H1 (cell line): ENCODE measurements at regions of chr19 and their contacts with region 1.

Region 1: GRCh38 chr19:53947624-53948023 is 15.1 kb upstream of the CACNG8 start:
- DNase-seq: no peak
- H3K4me3 ChIP-seq: no peak overlapping the region
- H3K27ac ChIP-seq: no peak overlapping the region
- H3K4me1 ChIP-seq: peaks cover 0 to 14% (median 7%) of the 10 kb centered on the region in 4 experiments; a peak in 4 of 7 replicates
- H3K27me3 ChIP-seq: no peaks in the 10 kb centered on the region
- CTCF ChIP-seq: peak; percentile 32 to 74 (median 67)
- EP300 ChIP-seq: no peak
- POLR2A ChIP-seq: no peak
- RAD21 ChIP-seq: peak; percentile 65 to 74

Region 2: GRCh38 chr19:53808710-53809125 is 138.9 kb before region 1 on chr19:
- CTCF ChIA-PET with region 1: interaction called, 12 read pairs
- POLR2A ChIA-PET with region 1: no interaction called
- DNase-seq: no peak
- H3K4me3 ChIP-seq: no peak overlapping the region
- H3K27ac ChIP-seq: no peak overlapping the region
- H3K4me1 ChIP-seq: no peaks in the 10 kb centered on the region; a peak in 1 of 7 replicates
- H3K27me3 ChIP-seq: peaks cover 0 to 5% (median 1%) of the 10 kb centered on the region in 4 experiments; a peak in 4 of 7 replicates
- CTCF ChIP-seq: peak in 2 of 3 experiments; percentile 68 to 77; a peak in 3 of 4 replicates
- EP300 ChIP-seq: no peak
- POLR2A ChIP-seq: no peak
- RAD21 ChIP-seq: peak; percentile 84 to 87

Region 3: GRCh38 chr19:53912653-53913052 is 35.0 kb before region 1 on chr19:
- CTCF ChIA-PET with region 1: interaction called, 52 read pairs
- POLR2A ChIA-PET with region 1: interaction called, 14 read pairs
- DNase-seq: peak in 1 of 2 experiments; percentile 94
- H3K4me3 ChIP-seq: no peak overlapping the region
- H3K27ac ChIP-seq: no peak overlapping the region
- H3K4me1 ChIP-seq: peaks cover 0 to 8% (median 2%) of the 10 kb centered on the region in 4 experiments; a peak in 4 of 7 replicates
- H3K27me3 ChIP-seq: peaks cover 0 to 10% (median 5%) of the 10 kb centered on the region in 4 experiments; a peak in 5 of 7 replicates
- CTCF ChIP-seq: peak; percentile 87 to 97 (median 95)
- EP300 ChIP-seq: no peak
- POLR2A ChIP-seq: no peak
- RAD21 ChIP-seq: peak; percentile 61 to 70

Region 4: DNA sequence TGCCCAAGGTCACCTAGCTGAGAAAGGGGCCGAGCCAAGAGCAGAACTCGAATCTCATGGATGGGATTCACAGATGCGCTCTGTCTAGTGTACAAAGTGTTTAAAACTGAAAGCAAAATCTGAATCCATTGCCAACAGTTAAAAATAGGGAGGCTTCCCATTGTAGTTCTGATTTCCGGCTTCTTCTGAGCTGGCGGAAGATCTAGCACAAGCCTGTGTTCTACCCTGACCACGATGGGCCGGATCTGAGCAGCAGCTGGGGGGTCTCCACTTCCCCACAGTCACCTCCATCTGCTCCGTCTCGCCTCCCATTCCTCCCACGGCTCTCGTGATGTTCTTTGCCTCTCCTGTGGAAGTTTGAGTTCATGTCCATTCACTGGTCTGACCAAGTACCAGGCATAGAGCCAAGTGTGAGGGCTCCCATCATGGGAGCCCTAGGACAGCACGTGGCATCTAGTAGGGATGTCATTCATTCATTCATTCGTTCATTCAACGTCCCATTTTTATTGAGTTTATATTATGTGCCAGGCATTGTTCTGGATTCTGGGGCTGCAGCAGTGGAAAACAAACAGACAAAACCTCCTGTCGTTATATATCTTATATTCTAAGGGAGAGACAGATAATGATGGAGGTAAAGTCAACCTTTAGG is 17.6 kb after region 1 on chr19:
- CTCF ChIA-PET with region 1: interaction called, 23 read pairs
- POLR2A ChIA-PET with region 1: interaction called, 33 read pairs
- DNase-seq: no peak
- H3K4me3 ChIP-seq: no peak overlapping the region
- H3K27ac ChIP-seq: no peak overlapping the region
- H3K4me1 ChIP-seq: peaks cover 0 to 11% (median 3%) of the 10 kb centered on the region in 4 experiments; a peak in 5 of 7 replicates
- H3K27me3 ChIP-seq: peaks cover 0 to 3% (median 1%) of the 10 kb centered on the region in 4 experiments; a peak in 2 of 7 replicates
- CTCF ChIP-seq: no peak
- EP300 ChIP-seq: no peak
- POLR2A ChIP-seq: no peak
- RAD21 ChIP-seq: no peak

Region 5: GRCh38 chr19:53982611-53983010 is 35.0 kb after region 1 on chr19:
- CTCF ChIA-PET with region 1: interaction called, 8 read pairs
- POLR2A ChIA-PET with region 1: interaction called, 15 read pairs
- DNase-seq: peak in 1 of 2 experiments; percentile 66
- H3K4me3 ChIP-seq: peak overlapping the region in 2 of 4 experiments; percentile 18 to 35; a peak in 3 of 8 replicates
- H3K27ac ChIP-seq: no peak overlapping the region
- H3K4me1 ChIP-seq: peaks cover 4 to 13% (median 9%) of the 10 kb centered on the region in 4 experiments
- H3K27me3 ChIP-seq: peaks cover 0 to 5% (median 2%) of the 10 kb centered on the region in 4 experiments; a peak in 3 of 7 replicates
- CTCF ChIP-seq: no peak
- EP300 ChIP-seq: no peak
- POLR2A ChIP-seq: no peak
- RAD21 ChIP-seq: no peak

Region 6: DNA sequence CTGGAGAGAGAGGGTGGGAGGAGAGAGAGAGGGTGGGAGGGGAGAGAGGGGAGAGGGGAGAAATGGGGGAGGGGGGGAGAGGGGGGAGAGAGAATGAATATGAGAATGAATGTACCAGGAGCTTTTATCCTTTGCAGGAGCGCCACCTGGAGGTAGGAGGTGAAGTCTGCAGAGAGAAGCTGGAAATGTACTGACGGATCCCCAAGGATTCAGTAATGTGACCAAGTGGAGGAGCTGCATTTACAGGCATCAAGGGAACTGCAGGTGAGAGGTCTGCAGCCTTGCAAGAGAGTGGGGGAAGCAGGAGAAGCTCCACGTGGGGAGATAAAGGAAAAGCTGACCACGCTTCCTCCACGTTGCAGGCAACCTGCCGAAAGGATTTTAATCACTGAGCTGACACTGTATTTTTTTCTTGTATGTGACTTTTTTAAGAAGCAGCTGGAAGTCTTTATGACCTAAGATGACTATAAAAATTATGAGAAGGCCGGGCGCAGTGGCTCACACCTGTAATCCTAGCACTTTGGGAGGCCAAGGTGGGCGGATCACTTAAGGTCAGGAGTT is 82.4 kb after region 1 on chr19:
- CTCF ChIA-PET with region 1: interaction called, 33 read pairs
- POLR2A ChIA-PET with region 1: no interaction called
- DNase-seq: peak; percentile 50 to 86
- H3K4me3 ChIP-seq: no peak overlapping the region
- H3K27ac ChIP-seq: no peak overlapping the region
- H3K4me1 ChIP-seq: peaks cover 2 to 8% (median 4%) of the 10 kb centered on the region in 4 experiments; a peak in 6 of 7 replicates
- H3K27me3 ChIP-seq: no peaks in the 10 kb centered on the region
- CTCF ChIP-seq: peak; percentile 43 to 79 (median 75)
- EP300 ChIP-seq: no peak
- POLR2A ChIP-seq: no peak
- RAD21 ChIP-seq: peak; percentile 82 to 85

Region 7: DNA sequence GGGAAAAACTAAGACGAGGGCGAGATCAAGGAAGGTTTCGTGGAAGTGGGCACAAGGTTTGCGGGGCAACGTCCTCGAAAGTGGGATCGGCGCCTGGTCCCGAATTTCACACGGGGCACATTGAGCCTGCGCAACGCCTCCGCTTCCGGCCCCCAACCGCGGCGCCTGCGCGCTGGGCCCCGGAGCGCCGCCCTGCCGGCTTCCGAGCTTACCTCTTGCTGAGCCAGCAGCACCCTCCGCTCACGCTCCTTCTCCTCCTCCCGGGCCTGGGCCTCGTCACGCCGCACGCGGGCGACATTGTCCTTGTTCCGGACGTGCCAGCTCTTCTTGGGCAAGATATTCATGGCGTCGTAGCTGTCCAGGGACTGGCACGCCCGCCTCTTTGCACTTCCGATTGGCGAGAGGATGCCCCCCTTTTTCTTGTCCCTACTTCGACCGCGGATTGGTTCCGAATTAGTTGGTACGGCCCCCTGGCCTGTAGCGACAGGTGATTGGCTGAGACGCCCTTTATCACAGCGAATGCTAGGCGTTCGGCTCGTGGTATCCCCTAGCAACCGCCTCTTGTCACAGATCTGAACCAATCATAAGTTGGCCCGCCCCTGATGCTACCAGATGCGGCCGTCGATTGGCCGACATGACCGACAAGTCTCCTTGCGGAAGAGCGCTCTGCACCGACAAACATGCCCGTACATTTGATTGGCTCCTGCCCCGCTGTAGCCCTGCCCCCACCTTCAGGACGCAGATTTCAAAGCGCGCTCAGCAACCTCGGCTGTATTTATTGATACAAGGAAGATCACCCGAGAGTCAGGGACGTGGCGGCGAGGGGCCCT is 211.9 kb after region 1 on chr19 and contains the start of gene LENG1:
- CTCF ChIA-PET with region 1: no interaction called
- POLR2A ChIA-PET with region 1: no interaction called
- DNase-seq: peak; percentile 93 to 100
- H3K4me3 ChIP-seq: peak within 1 kb of the TSS; percentile 81 to 96 (median 88)
- H3K27ac ChIP-seq: peak within 1 kb of the TSS; percentile 84
- H3K4me1 ChIP-seq: peaks cover 0 to 24% (median 11%) of the 10 kb centered on the region in 4 experiments; a peak in 6 of 7 replicates
- H3K27me3 ChIP-seq: peaks cover 0 to 8% (median 4%) of the 10 kb centered on the region in 4 experiments; a peak in 4 of 7 replicates
- CTCF ChIP-seq: peak in 2 of 3 experiments; percentile 25 to 31; a peak in 3 of 4 replicates
- EP300 ChIP-seq: no peak; a peak in 1 of 3 replicates
- POLR2A ChIP-seq: peak; percentile 74 to 76; a peak in 2 of 3 replicates
- RAD21 ChIP-seq: no peak
- total RNA-seq, gene LENG1: 4.4 and 4.6 TPM in 2 replicates